T-cell (primary cell): ENCODE measurements at regions of chr12 and their contacts with region 1.

Region 1: DNA sequence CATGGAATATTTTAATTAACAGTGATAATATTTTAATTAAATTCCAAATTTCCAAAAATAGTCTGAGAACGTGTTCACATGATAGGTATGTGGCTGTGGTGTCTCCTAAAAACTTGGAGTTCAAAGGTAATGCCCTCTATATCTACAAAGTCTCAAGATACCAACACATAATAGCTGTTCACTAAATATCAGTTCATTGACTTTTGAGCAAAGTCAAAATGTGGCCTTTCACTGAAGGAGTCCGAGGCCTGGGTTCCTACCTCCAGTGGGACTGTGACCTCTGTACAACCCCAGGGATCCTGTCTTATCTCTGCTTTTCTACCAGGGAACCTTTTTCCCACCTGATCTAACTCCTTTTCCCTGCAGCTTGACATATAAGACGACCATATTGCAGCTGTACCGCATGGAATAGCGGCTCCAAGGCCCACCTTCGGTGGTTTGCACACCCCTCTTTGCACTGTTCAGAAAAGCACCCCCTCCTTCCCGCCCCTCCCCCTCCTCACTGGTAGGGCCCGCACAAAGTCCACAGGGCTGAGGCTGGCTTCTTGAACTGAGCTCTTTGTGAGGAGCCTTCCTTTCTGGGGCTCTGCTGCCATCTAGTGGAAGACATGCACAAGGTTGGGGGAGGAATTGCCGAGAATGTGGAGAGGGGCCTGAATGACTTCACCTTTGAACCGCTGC is 3.1 kb downstream of the CCND2 start:
- DNase-seq: peak; percentile 67 to 95 (median 83)
- ATAC-seq: peak; percentile 21 to 38 (median 31)
- H3K4me3 ChIP-seq: peak overlapping the region in 1 of 2 donors; percentile 96
- H3K4me3 Mint-ChIP-seq: peak overlapping the region; percentile 92 to 98 (median 96)
- H3K27ac ChIP-seq: no peak overlapping the region
- H3K27ac Mint-ChIP-seq: peak overlapping the region; percentile 90 to 97
- H3K4me1 ChIP-seq: peaks cover 26 to 81% of the 10 kb centered on the region in 2 experiments
- H3K4me1 Mint-ChIP-seq: peaks cover 61 to 67% (median 67%) of the 10 kb centered on the region in 3 donors
- H3K27me3 ChIP-seq: no peaks in the 10 kb centered on the region
- H3K27me3 Mint-ChIP-seq: no peaks in the 10 kb centered on the region

Region 2: GRCh38 chr12:3872800-3873636 is 403.6 kb before region 1 on chr12 and contains the start of gene PARP11:
- CTCF ChIA-PET with region 1: interaction called, 6 to 14 read pairs
- POLR2A ChIA-PET with region 1: interaction called in 1 of 2 experiments, 7 read pairs
- DNase-seq: peak; percentile 95 to 99 (median 98)
- ATAC-seq: peak; percentile 95 to 99 (median 97)
- H3K4me3 ChIP-seq: peak within 1 kb of the TSS; percentile 70 to 93
- H3K4me3 Mint-ChIP-seq: peak within 1 kb of the TSS; percentile 97 to 98 (median 97)
- H3K27ac ChIP-seq: peak within 1 kb of the TSS; percentile 90
- H3K27ac Mint-ChIP-seq: peak within 1 kb of the TSS; percentile 99
- H3K4me1 ChIP-seq: peaks cover 19 to 35% of the 10 kb centered on the region in 2 experiments
- H3K4me1 Mint-ChIP-seq: peaks cover 46 to 58% (median 51%) of the 10 kb centered on the region in 3 donors
- H3K27me3 ChIP-seq: no peaks in the 10 kb centered on the region
- H3K27me3 Mint-ChIP-seq: no peaks in the 10 kb centered on the region
- total RNA-seq, gene PARP11: 24.9 to 30.2 (median 26.3) TPM

Region 3: DNA sequence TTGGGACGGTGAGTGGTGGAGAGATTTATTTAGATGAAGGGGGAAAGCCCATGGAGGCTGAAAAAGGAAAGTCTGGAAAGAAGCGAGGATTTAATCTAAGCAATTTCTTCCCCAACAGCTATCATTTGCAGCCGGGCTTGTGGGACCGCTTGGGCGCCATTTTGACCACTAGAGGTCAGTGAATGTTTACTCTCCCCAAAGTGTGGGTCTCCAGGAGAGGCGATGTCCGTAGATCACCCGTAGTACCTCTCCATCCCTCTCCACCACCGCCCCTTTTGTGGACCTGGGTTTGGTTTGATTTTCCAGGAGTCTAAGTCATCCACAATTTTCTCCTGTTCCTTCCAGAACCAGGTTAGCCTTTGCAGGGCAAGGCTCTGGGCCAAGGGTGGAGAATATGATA is 312.2 kb before region 1 on chr12:
- CTCF ChIA-PET with region 1: interaction called, 5 to 35 read pairs
- POLR2A ChIA-PET with region 1: no interaction called
- DNase-seq: no peak
- ATAC-seq: no peak
- H3K4me3 ChIP-seq: no peak overlapping the region
- H3K4me3 Mint-ChIP-seq: no peak overlapping the region
- H3K27ac ChIP-seq: no peak overlapping the region
- H3K27ac Mint-ChIP-seq: peak overlapping the region; percentile 31 to 49
- H3K4me1 ChIP-seq: peaks cover 18 to 26% of the 10 kb centered on the region in 2 experiments
- H3K4me1 Mint-ChIP-seq: peaks cover 24 to 30% (median 29%) of the 10 kb centered on the region in 3 donors
- H3K27me3 ChIP-seq: peaks cover 0 to 5% of the 10 kb centered on the region in 2 experiments
- H3K27me3 Mint-ChIP-seq: no peaks in the 10 kb centered on the region

Region 4: GRCh38 chr12:4107436-4107878 is 169.2 kb before region 1 on chr12:
- CTCF ChIA-PET with region 1: interaction called, 16 to 50 read pairs
- POLR2A ChIA-PET with region 1: interaction called in 1 of 2 experiments, 3 read pairs
- DNase-seq: peak; percentile 29 to 91 (median 70)
- ATAC-seq: peak; percentile 96 to 100 (median 97)
- H3K4me3 ChIP-seq: no peak overlapping the region
- H3K4me3 Mint-ChIP-seq: peak overlapping the region in 2 of 3 donors; percentile 28 to 45
- H3K27ac ChIP-seq: peak overlapping the region; percentile 65
- H3K27ac Mint-ChIP-seq: peak overlapping the region; percentile 71 to 79
- H3K4me1 ChIP-seq: peaks cover 7 to 12% of the 10 kb centered on the region in 2 experiments
- H3K4me1 Mint-ChIP-seq: peaks cover 14 to 21% (median 16%) of the 10 kb centered on the region in 3 donors
- H3K27me3 ChIP-seq: no peaks in the 10 kb centered on the region
- H3K27me3 Mint-ChIP-seq: no peaks in the 10 kb centered on the region

Region 5: DNA sequence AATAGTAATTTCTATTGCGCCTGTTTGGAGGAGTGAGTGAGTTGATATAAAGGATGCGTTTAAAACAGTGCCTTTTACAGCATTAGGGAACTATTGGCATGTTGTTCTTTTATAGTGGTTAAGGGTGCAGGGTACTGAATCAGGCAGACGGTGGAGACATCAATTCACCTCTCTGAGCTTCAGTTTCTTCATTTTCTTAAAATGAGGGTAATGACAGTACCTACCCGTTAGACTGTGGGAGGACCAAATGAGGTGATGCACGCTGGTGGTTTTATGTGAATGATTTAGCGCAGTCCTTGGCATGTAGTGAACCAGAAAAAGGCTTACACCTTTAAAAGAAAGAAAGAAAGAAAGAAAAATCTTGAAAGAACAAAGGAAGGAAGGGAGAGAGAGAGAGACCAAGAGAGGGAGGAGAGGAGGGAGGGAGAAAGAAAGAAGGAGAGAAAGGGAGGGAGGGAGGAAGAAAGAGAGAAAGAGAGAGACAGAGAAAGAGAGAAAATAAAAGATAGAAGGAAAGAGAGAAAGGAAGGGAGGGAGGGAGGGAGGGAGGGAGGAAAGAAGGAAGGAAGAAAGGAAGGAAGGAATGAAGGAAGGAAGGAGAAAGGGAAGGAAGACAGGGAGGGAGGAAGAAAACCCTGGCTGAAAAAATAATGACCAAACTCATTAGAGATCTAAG is 25.3 kb before region 1 on chr12:
- CTCF ChIA-PET with region 1: interaction called, 12 to 43 read pairs
- POLR2A ChIA-PET with region 1: interaction called in 1 of 2 experiments, 3 read pairs
- DNase-seq: peak in 11 of 35 experiments; percentile 17 to 64 (median 22)
- ATAC-seq: peak; percentile 91 to 100 (median 95)
- H3K4me3 ChIP-seq: no peak overlapping the region
- H3K4me3 Mint-ChIP-seq: no peak overlapping the region
- H3K27ac ChIP-seq: no peak overlapping the region
- H3K27ac Mint-ChIP-seq: peak overlapping the region in 1 of 2 donors; percentile 35
- H3K4me1 ChIP-seq: peaks cover 0 to 2% of the 10 kb centered on the region in 2 experiments
- H3K4me1 Mint-ChIP-seq: peaks cover 7 to 11% (median 7%) of the 10 kb centered on the region in 3 donors
- H3K27me3 ChIP-seq: peaks cover 0 to 2% of the 10 kb centered on the region in 2 experiments
- H3K27me3 Mint-ChIP-seq: peaks cover 3 to 12% of the 10 kb centered on the region in 2 donors